Left ventricle myocardium superior (tissue), 1 donor: ENCODE measurements at regions of chr7 and their contacts with region 1.

Region 1: DNA sequence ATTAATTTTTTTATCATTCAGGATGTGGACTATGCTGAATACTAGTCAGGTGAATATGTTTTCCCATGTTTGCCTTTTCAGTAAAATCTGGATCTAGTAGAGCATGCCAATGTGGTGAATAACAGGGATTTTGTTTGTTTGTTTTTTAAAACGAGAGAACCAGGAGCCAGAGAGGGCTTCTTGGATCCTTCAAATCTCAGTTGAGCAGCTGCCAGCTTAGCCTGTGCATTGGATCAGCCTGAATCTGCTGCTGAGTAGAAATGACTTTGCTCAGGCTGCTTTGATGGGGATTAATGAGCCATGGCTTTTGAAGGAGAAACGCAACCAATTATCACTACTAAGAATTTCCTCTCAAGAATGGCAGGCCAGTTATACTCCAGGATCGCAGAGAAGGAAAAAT is 493.8 kb downstream of the ARL4A start:
- DNase-seq: no peak
- ATAC-seq: peak; percentile 41

Region 2: DNA sequence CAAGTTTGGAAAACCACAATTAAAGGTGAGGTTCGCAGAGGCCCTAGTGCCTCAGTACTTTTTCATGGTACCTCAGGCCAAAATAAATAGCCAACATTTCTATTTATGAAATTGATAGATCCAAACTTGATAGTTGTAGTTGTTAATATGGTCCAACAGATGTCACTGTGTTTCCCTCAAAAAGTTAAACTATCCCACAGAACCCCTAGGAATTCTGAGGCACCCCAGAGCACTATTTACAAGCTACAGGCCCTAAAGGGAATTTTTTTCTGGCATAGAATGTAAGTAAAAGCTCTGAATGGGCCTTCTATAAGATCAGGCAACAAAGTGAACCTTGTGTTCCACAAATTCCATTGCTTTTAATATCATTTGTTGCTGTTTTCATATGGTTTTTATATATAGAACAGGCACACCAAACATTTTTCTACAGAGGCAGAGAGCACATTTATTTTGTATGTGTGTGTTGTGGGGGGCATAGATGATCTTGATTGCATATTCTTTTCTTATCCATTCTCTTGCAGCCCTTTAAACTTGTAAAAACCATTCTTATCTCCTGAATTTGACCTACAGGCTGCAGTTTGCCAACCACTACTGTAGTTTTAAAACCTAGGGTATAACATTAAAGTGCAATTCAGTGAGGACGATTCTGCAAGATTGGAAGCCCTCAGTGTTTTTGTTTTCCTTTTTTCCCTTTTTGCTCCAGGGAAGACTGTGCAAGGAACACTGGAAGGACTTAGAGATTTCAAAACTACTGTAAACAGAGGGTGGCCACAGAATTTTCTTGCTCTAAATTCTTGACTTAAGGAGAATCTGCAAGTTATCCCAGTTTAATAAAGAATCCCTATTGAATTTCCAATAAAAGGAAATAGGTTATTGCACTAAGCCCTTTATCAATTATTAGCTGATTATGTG is 497.3 kb before region 1 on chr7:
- intact Hi-C with region 1: loop called (anchors 5 kb)
- DNase-seq: no peak
- ATAC-seq: no peak